Transverse colon (tissue), 4 donors: ENCODE measurements at regions of chr1 and their contacts with region 1.

Region 1: GRCh38 chr1:27284425-27285273 is 37.3 kb upstream of the TMEM222 start:
- DNase-seq: peak; percentile 89
- H3K4me3 ChIP-seq: no peak overlapping the region
- H3K27ac ChIP-seq: no peak overlapping the region
- H3K4me1 ChIP-seq: no peaks in the 10 kb centered on the region
- H3K27me3 ChIP-seq: no peaks in the 10 kb centered on the region
- CTCF ChIP-seq: peak; percentile 82 to 89 (median 87)
- EP300 ChIP-seq: no peak
- POLR2A ChIP-seq: no peak

Region 2: GRCh38 chr1:26993237-26994019 is 291.2 kb before region 1 on chr1 and contains the start of gene TRNP1:
- in situ Hi-C with region 1: no loop called
- intact Hi-C with region 1: loop called (anchors 10 kb)
- DNase-seq: peak; percentile 53
- H3K4me3 ChIP-seq: peak within 1 kb of the TSS; percentile 45 to 90 (median 68)
- H3K27ac ChIP-seq: peak within 1 kb of the TSS; percentile 67 to 83 (median 77)
- H3K4me1 ChIP-seq: peaks cover 5 to 26% (median 17%) of the 10 kb centered on the region in 4 donors
- H3K27me3 ChIP-seq: peaks cover 65% of the 10 kb centered on the region
- CTCF ChIP-seq: no peak
- EP300 ChIP-seq: no peak
- POLR2A ChIP-seq: peak; percentile 38
- total RNA-seq, gene TRNP1: 0.80 to 4.1 (median 2.3) TPM in 3 of 4 donors, not detected in the other

Region 3: DNA sequence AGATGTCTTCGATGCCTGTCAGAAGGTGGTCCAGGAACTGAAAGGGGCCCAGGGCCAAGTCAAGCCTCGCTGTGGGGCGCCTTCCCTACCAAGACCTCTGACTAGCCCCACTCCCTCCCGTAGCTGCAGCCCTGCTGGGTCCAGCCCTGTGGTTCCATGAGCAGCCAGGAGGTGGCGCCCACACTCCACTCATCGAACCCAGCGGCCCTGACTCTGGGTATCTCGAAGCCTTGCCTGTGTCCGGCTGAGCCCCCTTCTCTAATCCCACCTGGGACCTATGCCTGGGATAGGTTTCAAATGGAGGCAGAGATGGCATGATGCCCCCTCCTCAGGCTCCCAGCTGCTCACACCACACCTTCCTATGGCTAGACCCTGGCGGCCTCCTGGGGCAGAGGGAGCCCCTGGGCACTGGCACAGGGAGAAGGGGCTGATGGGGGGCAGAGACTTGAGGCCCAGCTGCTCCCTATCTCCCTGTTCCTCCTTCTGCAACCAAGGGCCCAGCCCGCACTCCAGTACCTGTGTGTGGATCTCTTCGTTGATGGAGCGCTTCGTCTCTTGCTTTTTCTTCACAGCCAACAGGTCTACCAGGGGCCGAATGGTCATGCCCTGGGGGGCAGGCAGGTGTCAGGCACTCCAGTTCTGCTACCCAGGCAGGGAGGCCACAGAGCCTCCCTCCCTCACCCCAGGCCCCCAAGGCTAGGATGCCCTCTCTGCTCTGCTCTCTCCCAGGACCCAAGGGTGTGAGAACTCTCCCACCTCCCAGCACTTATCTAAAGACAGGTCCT is 181.8 kb before region 1 on chr1:
- in situ Hi-C with region 1: loop called in 3 of 4 experiments (anchors 5 to 25 kb)
- intact Hi-C with region 1: loop called (anchors 2 kb)
- DNase-seq: peak; percentile 82
- H3K4me3 ChIP-seq: no peak overlapping the region
- H3K27ac ChIP-seq: no peak overlapping the region
- H3K4me1 ChIP-seq: peaks cover 10 to 24% (median 20%) of the 10 kb centered on the region in 4 donors
- H3K27me3 ChIP-seq: no peaks in the 10 kb centered on the region
- CTCF ChIP-seq: peak; percentile 97 to 98 (median 97)
- EP300 ChIP-seq: no peak
- POLR2A ChIP-seq: no peak

Region 4: GRCh38 chr1:27111626-27112573 is 172.7 kb before region 1 on chr1:
- in situ Hi-C with region 1: loop called in 2 of 4 experiments (anchors 5 to 25 kb)
- intact Hi-C with region 1: no loop called
- DNase-seq: peak; percentile 80
- H3K4me3 ChIP-seq: no peak overlapping the region
- H3K27ac ChIP-seq: peak overlapping the region; percentile 43 to 69 (median 66)
- H3K4me1 ChIP-seq: peaks cover 23 to 57% (median 32%) of the 10 kb centered on the region in 4 donors
- H3K27me3 ChIP-seq: no peaks in the 10 kb centered on the region
- CTCF ChIP-seq: peak in 4 of 5 experiments; percentile 23 to 67 (median 44)
- EP300 ChIP-seq: no peak
- POLR2A ChIP-seq: no peak